ENCODE measurements at regions of chr1 and their contacts with region 1.

Region 1: DNA sequence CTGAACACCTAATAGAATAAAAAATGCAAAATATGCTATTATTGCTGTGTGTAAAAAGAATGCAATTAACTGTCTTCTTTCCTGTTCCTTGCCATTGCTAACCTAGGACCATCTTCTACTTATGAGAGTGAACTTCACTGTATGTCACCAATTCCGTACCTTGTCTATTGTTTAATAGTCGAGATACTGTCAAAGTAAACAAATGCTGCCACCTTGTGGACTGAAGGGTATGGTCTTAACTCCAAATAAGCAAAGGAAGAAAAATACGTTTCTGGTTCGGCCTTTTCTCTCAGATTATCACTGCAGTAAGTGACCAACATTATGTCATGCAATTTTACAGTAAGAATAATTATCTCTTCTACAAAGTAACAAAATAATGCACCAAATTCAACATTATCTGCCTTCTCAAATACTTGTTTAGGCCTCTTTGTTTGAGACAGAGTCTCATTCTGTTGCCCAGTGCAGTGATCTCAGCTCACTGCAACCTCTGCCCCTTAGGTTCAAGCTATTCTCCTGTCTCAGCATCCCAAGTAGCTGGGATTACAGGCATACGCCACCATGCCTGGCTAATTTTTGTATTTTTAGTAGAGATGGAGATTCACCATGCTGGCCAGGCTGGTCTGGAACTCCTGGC is 133.4 kb downstream of the COP1 start:
- DNase-seq: peak; percentile 54
- H3K4me3 ChIP-seq: no peak overlapping the region
- H3K27ac ChIP-seq: no peak overlapping the region
- H3K4me1 ChIP-seq: no peaks in the 10 kb centered on the region
- H3K27me3 ChIP-seq: no peaks in the 10 kb centered on the region
- CTCF ChIP-seq: peak; percentile 56

Region 2: DNA sequence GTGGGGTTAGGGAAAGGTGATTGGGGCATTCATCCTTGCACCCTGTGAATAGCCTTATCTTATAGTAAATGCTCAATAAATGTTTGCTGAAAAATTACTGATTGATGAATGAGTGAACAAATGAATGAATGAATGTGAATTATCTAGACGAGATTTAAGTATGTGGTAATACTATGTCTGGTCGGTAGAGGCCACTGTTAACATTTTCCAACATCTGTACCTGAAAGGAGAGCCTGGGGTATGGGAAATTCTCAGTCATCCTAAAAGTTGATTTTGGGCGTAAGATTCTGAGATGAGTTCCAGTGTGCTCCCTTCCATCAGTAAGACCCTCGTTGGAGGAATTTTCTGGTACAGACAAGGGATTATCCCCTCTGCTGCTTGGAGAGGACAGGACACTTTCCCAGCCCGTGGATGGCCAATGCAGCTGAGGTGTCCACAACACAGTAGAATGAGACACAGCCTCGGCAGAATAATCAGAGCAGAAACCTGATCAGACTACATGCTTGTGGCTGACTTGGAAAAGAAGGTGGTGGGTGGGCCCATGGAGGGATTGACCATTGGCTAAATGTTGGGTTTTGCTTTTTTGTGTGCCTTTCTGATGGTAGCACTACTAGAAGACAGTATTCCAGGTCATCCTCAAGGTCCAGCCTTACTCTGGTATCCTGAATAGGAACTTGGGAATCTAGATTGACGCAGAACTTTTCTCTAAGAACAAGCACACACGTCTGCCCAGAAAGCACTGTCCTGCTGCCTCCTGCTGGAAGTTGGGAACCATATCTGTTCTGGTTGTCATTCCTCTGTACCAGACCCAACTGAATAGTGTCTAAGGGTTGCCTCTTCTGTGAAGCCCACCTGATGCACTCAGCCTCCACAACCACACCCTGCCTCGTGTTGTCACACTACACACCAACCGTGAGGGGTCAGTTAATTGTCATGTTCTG is 592.2 kb before region 1 on chr1:
- intact Hi-C with region 1: loop called (anchors 10 kb)
- DNase-seq: no peak
- H3K4me3 ChIP-seq: no peak overlapping the region
- H3K27ac ChIP-seq: no peak overlapping the region
- H3K4me1 ChIP-seq: no peaks in the 10 kb centered on the region
- H3K27me3 ChIP-seq: no peaks in the 10 kb centered on the region
- CTCF ChIP-seq: peak; percentile 44